Mammary epithelial cell (primary cell): ENCODE measurements at regions of chr16 and their contacts with region 1.

Region 1: GRCh38 chr16:84414789-84415326 is 46.5 kb downstream of the ATP2C2 start:
- DNase-seq: no peak
- H3K4me3 ChIP-seq: no peak overlapping the region
- H3K27ac ChIP-seq: no peak overlapping the region
- H3K4me1 ChIP-seq: no peaks in the 10 kb centered on the region
- H3K27me3 ChIP-seq: no peaks in the 10 kb centered on the region
- CTCF ChIP-seq: no peak

Region 2: DNA sequence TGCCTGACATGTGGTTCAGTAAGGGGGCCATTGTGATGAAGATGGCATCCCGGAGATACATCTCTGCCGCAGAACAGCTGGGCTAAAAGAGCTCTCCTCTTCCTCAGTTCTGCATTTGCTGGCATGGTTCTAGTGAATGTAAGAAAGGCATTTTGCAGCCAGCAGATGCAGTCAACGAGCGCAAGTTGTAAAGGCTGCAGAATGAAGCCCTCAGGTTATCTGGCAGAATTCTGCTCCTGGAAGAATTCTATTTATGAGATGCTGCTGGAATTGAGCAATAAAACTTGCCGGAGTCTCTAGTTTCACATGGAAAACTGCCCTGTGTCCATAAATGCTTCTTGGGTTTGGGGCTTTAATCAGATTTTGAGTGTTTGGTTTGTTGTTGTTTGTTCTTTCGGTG is 783.9 kb before region 1 on chr16:
- CTCF ChIA-PET with region 1: no interaction called
- dilution Hi-C with region 1: no loop called
- in situ Hi-C with region 1: no loop called
- intact Hi-C with region 1: no loop called
- DNase-seq: no peak
- H3K4me3 ChIP-seq: no peak overlapping the region
- H3K27ac ChIP-seq: no peak overlapping the region
- H3K4me1 ChIP-seq: no peaks in the 10 kb centered on the region
- H3K27me3 ChIP-seq: no peaks in the 10 kb centered on the region
- CTCF ChIP-seq: no peak

Region 3: GRCh38 chr16:84332975-84333684 is 81.7 kb before region 1 on chr16:
- CTCF ChIA-PET with region 1: no interaction called
- dilution Hi-C with region 1: no loop called
- in situ Hi-C with region 1: no loop called
- intact Hi-C with region 1: no loop called
- DNase-seq: no peak
- H3K4me3 ChIP-seq: no peak overlapping the region
- H3K27ac ChIP-seq: no peak overlapping the region
- H3K4me1 ChIP-seq: no peaks in the 10 kb centered on the region
- H3K27me3 ChIP-seq: peaks cover 1% of the 10 kb centered on the region
- CTCF ChIP-seq: no peak

Region 4: GRCh38 chr16:84369720-84370565 is 44.9 kb before region 1 on chr16:
- CTCF ChIA-PET with region 1: no interaction called
- dilution Hi-C with region 1: loop called (anchors 5 kb)
- in situ Hi-C with region 1: no loop called
- intact Hi-C with region 1: no loop called
- DNase-seq: peak; percentile 73
- H3K4me3 ChIP-seq: no peak overlapping the region
- H3K27ac ChIP-seq: no peak overlapping the region
- H3K4me1 ChIP-seq: peaks cover 10% of the 10 kb centered on the region
- H3K27me3 ChIP-seq: peaks cover 29% of the 10 kb centered on the region
- CTCF ChIP-seq: no peak

Region 5: DNA sequence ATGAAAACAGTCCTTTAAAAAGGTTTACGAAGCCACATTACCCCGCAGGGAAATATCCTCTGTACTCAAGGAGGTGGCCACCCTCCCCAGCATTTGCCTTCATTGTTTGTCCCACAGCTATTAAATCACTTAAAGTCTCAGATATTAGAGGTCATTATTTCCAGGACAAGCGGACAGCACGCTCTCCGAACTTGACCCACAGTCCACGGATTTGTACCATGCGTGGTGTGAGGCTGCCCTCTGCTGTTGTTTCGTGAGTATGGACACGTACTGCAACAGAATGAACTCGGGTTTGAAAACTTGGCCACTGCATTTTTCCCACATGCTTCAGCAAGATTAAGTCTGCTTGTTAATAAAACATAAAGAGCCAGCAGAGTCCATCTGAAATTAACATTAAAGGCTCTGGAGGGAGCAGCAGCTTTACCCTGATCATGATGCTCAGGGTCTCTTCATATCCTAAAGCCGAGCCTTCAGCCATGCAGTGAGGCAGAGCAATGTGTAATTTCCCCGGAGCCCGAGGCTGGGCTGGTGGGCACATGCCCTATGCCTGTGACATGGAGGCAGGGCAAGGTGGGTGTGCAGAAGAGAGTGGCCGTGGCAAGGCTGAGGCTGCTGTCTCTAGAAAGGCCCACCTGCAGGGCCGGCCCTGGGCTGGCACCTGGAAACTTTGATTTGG is 69.9 kb after region 1 on chr16:
- CTCF ChIA-PET with region 1: no interaction called
- dilution Hi-C with region 1: loop called (anchors 5 kb)
- in situ Hi-C with region 1: no loop called
- intact Hi-C with region 1: no loop called
- DNase-seq: no peak
- H3K4me3 ChIP-seq: no peak overlapping the region
- H3K27ac ChIP-seq: no peak overlapping the region
- H3K4me1 ChIP-seq: peaks cover 11% of the 10 kb centered on the region
- H3K27me3 ChIP-seq: no peaks in the 10 kb centered on the region
- CTCF ChIP-seq: peak; percentile 46 to 67